Psoas muscle (tissue), 8 donors: ENCODE measurements at regions of chr1 and their contacts with region 1.

Region 1: DNA sequence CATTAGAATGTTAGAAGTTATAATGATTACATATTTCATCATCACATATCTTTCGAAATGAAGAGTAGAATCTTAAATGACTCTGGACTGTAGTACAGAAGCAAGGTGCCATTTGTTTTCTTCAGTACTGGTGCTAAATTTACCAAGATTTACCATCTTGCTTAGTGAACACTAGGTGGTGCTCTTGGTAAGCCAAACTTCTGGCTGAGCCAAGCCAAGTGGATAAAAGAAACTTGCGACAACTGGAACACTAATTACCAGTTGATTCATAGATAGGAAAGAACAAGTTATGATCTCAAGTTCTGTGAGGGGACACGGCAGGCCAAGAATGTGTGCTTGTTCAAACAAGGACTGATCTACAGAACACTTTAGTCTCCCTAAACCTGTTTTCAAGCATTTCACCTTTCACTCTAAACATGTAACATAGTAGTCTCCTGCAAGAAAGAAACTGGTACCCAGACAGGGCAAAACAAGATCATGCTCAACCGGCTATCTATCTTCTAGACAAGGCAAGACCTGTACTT is 19.8 kb downstream of the SPRTN start:
- DNase-seq: peak in 1 of 2 donors; percentile 63
- ATAC-seq: peak; percentile 65 to 81 (median 73)
- H3K4me3 ChIP-seq: peak overlapping the region; percentile 5
- H3K27ac ChIP-seq: peak overlapping the region; percentile 73
- H3K4me1 ChIP-seq: peaks cover 30% of the 10 kb centered on the region
- H3K27me3 ChIP-seq: no peaks in the 10 kb centered on the region
- CTCF ChIP-seq: peak; percentile 84

Region 2: DNA sequence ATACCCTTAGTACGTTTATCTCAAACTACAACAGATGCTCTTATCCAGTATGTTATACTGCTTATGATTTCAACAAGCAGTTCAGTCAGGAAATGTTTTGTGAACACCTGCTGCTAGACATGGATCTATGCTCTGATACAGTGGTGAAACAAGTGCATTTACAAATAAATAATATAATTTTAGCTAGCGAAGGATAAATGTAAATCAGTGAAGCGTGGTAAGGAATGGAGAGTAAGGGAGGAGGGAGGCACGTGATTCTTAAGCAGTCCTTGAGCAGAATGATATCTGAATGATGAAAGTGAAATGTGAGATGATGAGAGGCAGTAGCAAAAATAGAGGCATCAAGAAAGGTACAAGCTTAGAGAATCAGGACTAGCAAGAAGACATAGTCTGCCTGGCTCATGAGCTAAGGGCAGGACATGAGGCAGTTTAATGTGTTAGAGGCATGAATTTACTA is 176.8 kb after region 1 on chr1:
- intact Hi-C with region 1: loop called in 1 of 2 experiments (anchors 5 kb)
- DNase-seq: no peak
- ATAC-seq: peak; percentile 89 to 95 (median 94)
- H3K4me3 ChIP-seq: peak overlapping the region; percentile 45
- H3K27ac ChIP-seq: peak overlapping the region; percentile 81
- H3K4me1 ChIP-seq: peaks cover 65% of the 10 kb centered on the region
- H3K27me3 ChIP-seq: no peaks in the 10 kb centered on the region
- CTCF ChIP-seq: no peak

Region 3: GRCh38 chr1:231584921-231585320 is 227.0 kb after region 1 on chr1:
- intact Hi-C with region 1: loop called (anchors 2 to 5 kb)
- DNase-seq: no peak
- ATAC-seq: no peak
- H3K4me3 ChIP-seq: no peak overlapping the region
- H3K27ac ChIP-seq: no peak overlapping the region
- H3K4me1 ChIP-seq: peaks cover 7% of the 10 kb centered on the region
- H3K27me3 ChIP-seq: no peaks in the 10 kb centered on the region
- CTCF ChIP-seq: no peak

Region 4: GRCh38 chr1:231590453-231591198 is 232.7 kb after region 1 on chr1:
- intact Hi-C with region 1: loop called (anchors 2 to 5 kb)
- DNase-seq: peak in 1 of 2 donors; percentile 36
- ATAC-seq: peak; percentile 83 to 93 (median 88)
- H3K4me3 ChIP-seq: no peak overlapping the region
- H3K27ac ChIP-seq: no peak overlapping the region
- H3K4me1 ChIP-seq: no peaks in the 10 kb centered on the region
- H3K27me3 ChIP-seq: no peaks in the 10 kb centered on the region
- CTCF ChIP-seq: peak; percentile 73